CD14-positive monocyte (primary cell): ENCODE measurements at regions of chr13 and their contacts with region 1.

Region 1: DNA sequence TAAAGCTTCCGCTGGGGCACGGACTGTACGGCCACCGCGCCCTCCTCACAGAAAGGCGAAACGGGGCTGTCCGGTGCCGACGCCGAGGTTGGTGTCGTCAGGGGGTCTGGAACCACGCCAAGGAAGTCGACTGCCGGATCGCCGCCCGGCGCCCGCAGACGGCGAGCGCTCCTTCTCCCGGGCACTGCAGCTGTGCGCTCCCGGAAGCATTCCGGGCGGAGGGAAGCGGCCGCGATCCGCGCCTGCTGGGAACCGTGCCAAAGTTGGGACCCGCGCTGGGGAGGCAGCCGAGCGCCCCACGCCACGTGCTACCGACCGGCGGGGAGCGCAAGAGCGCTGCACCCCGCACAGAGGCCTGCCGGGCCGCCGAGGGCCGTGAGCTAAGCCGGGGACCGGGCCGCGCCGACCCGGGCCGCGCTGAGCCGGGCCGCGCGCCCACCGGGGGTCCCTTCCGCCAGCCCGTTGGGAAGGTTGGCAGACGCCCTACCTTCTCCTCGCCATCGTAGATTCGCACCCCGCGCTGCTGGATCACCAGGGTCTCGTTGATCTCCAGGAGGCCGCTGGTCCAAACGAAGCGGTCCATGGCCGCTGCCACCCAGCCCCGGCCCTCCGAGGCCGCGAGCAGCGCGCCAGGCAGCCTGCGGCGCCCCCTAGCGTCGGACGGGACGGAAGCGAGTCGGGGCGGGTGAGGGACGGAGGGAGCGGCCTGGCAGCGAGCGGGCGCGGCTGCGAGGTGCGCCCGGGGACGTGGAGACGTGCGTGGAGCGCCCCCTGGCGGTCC is at the start of gene VPS36:
- DNase-seq: peak; percentile 95 to 96 (median 96)
- H3K4me3 ChIP-seq: peak within 1 kb of the TSS; percentile 70 to 80 (median 72)
- H3K4me3 Mint-ChIP-seq: peak within 1 kb of the TSS; percentile 97
- H3K27ac ChIP-seq: peak within 1 kb of the TSS; percentile 67 to 88
- H3K27ac Mint-ChIP-seq: peak within 1 kb of the TSS; percentile 95 to 98 (median 98)
- H3K4me1 ChIP-seq: peaks cover 29 to 34% of the 10 kb centered on the region in 2 donors
- H3K4me1 Mint-ChIP-seq: peaks cover 37% of the 10 kb centered on the region
- H3K27me3 ChIP-seq: no peaks in the 10 kb centered on the region
- H3K27me3 Mint-ChIP-seq: no peaks in the 10 kb centered on the region
- CTCF ChIP-seq: peak; percentile 100
- polyA plus RNA-seq, gene VPS36: 20.3 to 37.0 (median 25.2) TPM

Region 2: DNA sequence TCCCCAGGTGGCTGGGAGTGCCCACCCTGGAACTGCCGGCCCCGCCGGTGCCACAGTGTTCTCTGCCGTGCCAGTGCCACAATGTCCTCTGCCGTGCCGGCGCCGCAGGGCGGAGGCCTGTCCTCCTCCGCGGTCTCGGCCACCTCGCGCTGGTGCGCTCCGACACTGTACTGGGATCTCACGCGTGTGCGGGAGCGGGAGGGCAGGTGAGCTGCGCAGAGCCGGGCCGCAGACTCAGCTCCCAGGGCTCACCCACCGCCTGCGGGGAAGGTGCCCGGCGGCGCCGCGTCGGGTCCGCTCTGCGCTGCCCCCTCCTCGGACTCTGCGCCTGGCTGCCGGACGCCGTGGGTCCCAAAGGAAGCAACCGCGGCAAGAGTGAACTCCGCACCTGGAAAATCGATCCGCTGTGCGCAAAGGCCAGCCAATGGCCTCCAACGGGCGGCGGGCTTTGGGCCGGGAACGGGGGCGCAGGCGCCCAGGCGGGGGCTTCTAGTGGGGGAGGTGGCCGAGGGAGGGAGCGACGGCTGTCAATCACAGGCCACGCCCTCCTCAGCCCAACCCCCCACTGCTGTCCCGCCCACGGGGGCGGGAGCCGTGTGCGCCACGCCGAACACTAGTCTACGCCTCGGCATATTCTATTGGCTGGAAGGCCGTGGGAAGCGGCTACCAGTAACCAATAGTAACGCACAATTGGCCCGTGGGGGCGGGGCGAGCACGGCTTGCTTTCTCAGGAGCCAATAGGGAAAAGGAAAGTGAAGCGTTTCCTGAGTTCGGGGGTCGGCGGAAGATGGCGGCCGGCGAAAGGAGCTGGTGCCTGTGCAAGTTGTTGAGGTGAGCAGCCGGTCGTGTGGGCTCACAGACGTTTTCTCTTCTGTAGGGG is 438.3 kb before region 1 on chr13 and contains the start of gene ALG11:
- intact Hi-C with region 1: loop called (anchors 5 kb)
- DNase-seq: peak; percentile 95 to 99 (median 97)
- H3K4me3 ChIP-seq: peak within 1 kb of the TSS; percentile 74 to 97 (median 87)
- H3K4me3 Mint-ChIP-seq: peak within 1 kb of the TSS; percentile 95 to 99
- H3K27ac ChIP-seq: peak within 1 kb of the TSS; percentile 24 to 86
- H3K27ac Mint-ChIP-seq: peak within 1 kb of the TSS; percentile 90 to 98 (median 95)
- H3K4me1 ChIP-seq: peaks cover 16 to 24% of the 10 kb centered on the region in 2 donors
- H3K4me1 Mint-ChIP-seq: peaks cover 24% of the 10 kb centered on the region
- H3K27me3 ChIP-seq: peaks cover 22 to 33% of the 10 kb centered on the region in 2 donors
- H3K27me3 Mint-ChIP-seq: peaks cover 26 to 37% (median 30%) of the 10 kb centered on the region in 3 donors
- CTCF ChIP-seq: no peak
- polyA plus RNA-seq, gene ALG11: 3.7 to 16.9 (median 14.2) TPM

Region 3: DNA sequence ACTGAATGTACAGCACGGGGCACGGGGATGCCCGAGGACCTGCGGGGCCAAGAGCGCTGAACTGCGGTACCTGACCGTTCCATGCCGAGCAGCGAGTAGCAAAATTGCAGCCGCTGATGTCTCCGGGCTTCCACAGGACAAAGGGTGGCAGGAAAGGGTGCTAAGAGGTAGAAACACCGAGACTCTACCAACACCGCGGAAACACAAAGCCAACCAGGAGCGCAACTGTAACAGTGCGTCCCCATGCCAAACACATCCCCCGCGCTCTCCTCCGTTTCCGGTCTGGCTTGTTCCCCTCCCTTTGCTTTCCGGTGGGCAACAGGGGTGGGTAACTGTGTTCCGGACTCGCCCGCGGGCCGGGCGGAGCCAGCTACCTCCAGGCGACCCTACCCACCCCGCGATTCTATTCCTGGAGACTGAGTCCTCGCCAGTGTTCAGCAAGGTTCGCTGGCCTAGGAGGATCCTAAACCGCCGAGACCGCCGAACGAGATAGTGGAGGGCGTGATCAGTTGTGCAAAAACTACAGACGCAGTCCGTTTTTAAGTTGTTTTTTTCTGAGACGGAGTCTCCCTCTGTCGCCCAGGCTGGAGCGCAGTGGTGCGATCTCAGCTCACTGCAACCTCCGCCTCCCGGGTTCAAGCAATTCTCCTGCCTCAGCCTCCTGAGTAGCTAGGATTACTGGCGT is 255.9 kb before region 1 on chr13:
- intact Hi-C with region 1: loop called in 1 of 2 experiments (anchors 10 kb)
- DNase-seq: peak; percentile 66 to 77 (median 74)
- H3K4me3 ChIP-seq: peak overlapping the region; percentile 85 to 96 (median 95)
- H3K4me3 Mint-ChIP-seq: peak overlapping the region; percentile 98
- H3K27ac ChIP-seq: peak overlapping the region; percentile 40 to 71
- H3K27ac Mint-ChIP-seq: peak overlapping the region; percentile 82 to 93 (median 89)
- H3K4me1 ChIP-seq: peaks cover 9 to 22% of the 10 kb centered on the region in 2 donors
- H3K4me1 Mint-ChIP-seq: peaks cover 25% of the 10 kb centered on the region
- H3K27me3 ChIP-seq: no peaks in the 10 kb centered on the region
- H3K27me3 Mint-ChIP-seq: peaks cover 0 to 8% (median 2%) of the 10 kb centered on the region in 3 donors
- CTCF ChIP-seq: no peak

Region 4: GRCh38 chr13:52348983-52349780 is 101.0 kb before region 1 on chr13:
- intact Hi-C with region 1: loop called in 1 of 2 experiments (anchors 10 kb)
- DNase-seq: peak in 1 of 3 donors; percentile 19
- H3K4me3 ChIP-seq: no peak overlapping the region
- H3K4me3 Mint-ChIP-seq: no peak overlapping the region
- H3K27ac ChIP-seq: no peak overlapping the region
- H3K27ac Mint-ChIP-seq: no peak overlapping the region
- H3K4me1 ChIP-seq: no peaks in the 10 kb centered on the region
- H3K4me1 Mint-ChIP-seq: no peaks in the 10 kb centered on the region
- H3K27me3 ChIP-seq: no peaks in the 10 kb centered on the region
- H3K27me3 Mint-ChIP-seq: peaks cover 0 to 6% (median 3%) of the 10 kb centered on the region in 3 donors
- CTCF ChIP-seq: no peak

Region 5: DNA sequence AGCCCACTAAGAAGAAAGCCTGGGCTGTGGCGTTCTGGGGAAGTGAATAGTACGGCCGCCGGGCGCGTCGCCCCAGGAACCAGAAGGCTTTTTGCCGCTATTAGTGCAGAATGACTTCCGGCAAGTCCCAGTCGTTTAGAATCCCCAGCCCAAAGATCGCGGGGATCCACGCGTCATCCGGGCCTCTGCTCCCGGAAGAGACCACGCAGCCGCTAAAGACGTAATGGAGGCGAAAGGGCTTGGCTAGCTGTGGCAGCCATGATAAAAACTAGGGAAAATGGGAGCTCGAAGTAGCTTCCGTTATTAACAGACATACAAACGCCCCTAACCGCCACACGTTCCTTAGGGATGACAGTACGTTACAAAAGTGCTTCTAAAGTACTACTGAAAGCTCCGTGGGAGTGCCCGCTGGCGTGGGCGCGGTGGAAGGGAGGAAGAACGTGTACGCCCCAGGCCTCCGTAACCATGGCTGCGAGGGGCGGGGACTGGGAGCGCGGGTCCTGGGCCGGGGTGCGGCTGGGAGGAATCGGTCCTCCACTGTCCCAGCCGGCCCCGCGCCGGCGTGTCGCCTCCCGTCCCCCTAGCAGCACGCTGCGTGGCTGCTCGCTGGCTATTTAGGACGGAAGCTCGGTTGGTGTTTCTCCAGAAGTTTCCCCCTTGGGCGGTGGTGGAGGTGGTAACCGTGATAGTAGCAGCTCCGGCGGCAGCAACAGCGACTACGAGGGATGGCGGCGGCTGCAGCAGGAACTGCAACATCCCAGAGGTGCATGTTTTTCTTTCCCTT is 202.2 kb after region 1 on chr13 and contains the start of gene SUGT1:
- intact Hi-C with region 1: loop called (anchors 5 to 10 kb)
- DNase-seq: peak; percentile 92 to 93 (median 92)
- H3K4me3 ChIP-seq: peak within 1 kb of the TSS; percentile 73 to 81 (median 79)
- H3K4me3 Mint-ChIP-seq: no peak within 1 kb of the TSS
- H3K27ac ChIP-seq: peak within 1 kb of the TSS; percentile 85 to 89
- H3K27ac Mint-ChIP-seq: no peak within 1 kb of the TSS
- H3K4me1 ChIP-seq: peaks cover 14 to 30% of the 10 kb centered on the region in 2 donors
- H3K4me1 Mint-ChIP-seq: peaks cover 10% of the 10 kb centered on the region
- H3K27me3 ChIP-seq: no peaks in the 10 kb centered on the region
- H3K27me3 Mint-ChIP-seq: no peaks in the 10 kb centered on the region
- CTCF ChIP-seq: peak; percentile 67
- polyA plus RNA-seq, gene SUGT1: 18.1 to 40.1 (median 37.7) TPM